ENCODE measurements at regions of chr4 and their contacts with region 1.

Region 1: GRCh38 chr4:2761035-2761923 is 5.1 kb upstream of the TNIP2 start:
- DNase-seq: peak; percentile 74 to 88 (median 80)
- ATAC-seq: peak; percentile 59 to 83 (median 74)
- H3K4me3 ChIP-seq: no peak overlapping the region
- H3K27ac ChIP-seq: peak overlapping the region; percentile 46 to 95 (median 88)
- H3K4me1 ChIP-seq: peaks cover 13 to 18% (median 15%) of the 10 kb centered on the region in 3 donors
- H3K27me3 ChIP-seq: no peaks in the 10 kb centered on the region
- CTCF ChIP-seq: no peak

Region 2: DNA sequence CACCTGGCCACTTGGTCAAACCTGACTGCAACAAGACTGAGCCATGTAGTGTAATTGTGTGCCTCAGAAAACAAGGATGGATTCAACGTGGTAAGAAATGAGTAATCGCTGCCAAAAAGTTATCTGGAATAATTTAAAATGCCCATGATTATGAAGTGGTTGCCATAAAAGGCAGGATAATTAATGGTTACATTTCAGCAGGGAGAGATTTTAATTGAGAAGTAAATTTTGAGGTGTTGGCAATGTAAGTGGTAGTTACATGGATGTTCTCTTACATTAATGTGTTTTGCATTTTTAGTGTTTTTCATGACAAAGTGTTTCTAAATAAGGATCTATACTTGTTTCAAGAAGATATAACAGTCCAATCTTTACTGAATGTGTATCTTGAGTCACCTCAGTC is 535.0 kb before region 1 on chr4:
- intact Hi-C with region 1: no loop called
- DNase-seq: no peak
- ATAC-seq: no peak
- H3K4me3 ChIP-seq: no peak overlapping the region
- H3K27ac ChIP-seq: no peak overlapping the region
- H3K4me1 ChIP-seq: no peaks in the 10 kb centered on the region
- H3K27me3 ChIP-seq: no peaks in the 10 kb centered on the region
- CTCF ChIP-seq: no peak

Region 3: DNA sequence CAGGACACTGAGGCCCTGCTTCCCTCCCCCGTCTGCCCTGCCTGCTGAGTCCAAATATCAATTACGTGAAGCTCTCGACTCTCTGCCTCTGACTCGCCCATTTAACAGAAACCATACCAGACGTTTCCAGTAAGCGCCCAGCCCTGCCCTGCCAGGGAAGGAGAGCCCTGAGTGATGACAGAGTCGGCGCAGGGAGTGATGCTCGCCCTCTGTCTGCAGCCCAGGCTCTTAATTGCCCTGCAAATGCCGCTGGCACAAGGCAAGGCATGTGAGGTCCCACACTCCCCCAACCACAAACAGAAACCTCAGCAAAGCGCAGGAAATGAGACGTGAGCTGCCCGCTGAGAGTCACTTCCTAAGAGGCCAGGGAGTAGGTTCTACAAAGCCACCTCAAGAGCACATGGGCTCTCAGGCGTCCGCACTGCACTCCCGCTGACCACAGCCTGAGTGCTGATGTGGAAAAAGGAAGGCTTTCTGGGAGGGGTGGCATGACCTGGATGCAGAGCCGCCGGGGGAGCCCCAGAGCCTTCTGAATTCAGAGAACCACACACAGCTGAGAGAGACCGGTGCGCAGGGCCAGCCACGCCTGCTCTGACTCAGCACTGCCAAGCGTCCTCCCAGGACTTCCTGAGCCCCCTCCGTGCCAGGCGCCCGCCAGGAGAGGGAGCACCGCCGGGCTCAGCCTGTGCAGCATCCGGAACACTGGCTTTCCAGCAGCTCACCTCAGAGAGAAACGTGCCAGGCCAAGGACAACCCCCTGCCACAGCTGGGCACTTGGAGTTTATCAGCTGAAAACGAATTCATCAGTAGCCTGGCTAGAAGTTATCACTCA is 348.2 kb before region 1 on chr4:
- intact Hi-C with region 1: no loop called
- DNase-seq: peak; percentile 80 to 92 (median 87)
- ATAC-seq: peak; percentile 92 to 96 (median 96)
- H3K4me3 ChIP-seq: peak overlapping the region in 1 of 4 donors; percentile 19
- H3K27ac ChIP-seq: peak overlapping the region in 3 of 4 donors; percentile 25 to 44 (median 38)
- H3K4me1 ChIP-seq: peaks cover 5 to 12% (median 9%) of the 10 kb centered on the region in 3 donors
- H3K27me3 ChIP-seq: no peaks in the 10 kb centered on the region
- CTCF ChIP-seq: peak in 1 of 4 donors; percentile 15

Region 4: DNA sequence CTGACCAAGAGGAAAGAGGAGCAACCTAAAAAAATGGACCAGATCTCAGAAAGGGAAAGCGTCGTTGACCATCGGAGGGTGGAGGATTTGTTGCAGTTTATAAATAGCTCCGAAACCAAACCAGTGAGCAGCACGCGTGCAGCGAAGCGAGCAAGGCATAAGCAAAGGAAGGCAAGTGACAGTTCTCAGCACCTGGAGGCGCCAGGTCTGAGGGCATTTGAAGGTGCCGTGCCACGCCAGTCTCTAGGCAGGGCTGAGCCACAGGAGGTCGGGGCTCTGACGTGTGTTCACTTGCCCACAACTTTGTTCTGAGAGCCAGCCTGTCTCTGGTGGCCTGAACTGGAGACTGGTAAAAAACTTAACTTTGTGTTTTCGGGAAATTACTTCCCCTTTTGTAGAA is 64.9 kb before region 1 on chr4:
- intact Hi-C with region 1: no loop called
- DNase-seq: peak in 1 of 6 donors; percentile 8
- ATAC-seq: no peak
- H3K4me3 ChIP-seq: no peak overlapping the region
- H3K27ac ChIP-seq: no peak overlapping the region
- H3K4me1 ChIP-seq: no peaks in the 10 kb centered on the region
- H3K27me3 ChIP-seq: no peaks in the 10 kb centered on the region
- CTCF ChIP-seq: no peak

Region 5: DNA sequence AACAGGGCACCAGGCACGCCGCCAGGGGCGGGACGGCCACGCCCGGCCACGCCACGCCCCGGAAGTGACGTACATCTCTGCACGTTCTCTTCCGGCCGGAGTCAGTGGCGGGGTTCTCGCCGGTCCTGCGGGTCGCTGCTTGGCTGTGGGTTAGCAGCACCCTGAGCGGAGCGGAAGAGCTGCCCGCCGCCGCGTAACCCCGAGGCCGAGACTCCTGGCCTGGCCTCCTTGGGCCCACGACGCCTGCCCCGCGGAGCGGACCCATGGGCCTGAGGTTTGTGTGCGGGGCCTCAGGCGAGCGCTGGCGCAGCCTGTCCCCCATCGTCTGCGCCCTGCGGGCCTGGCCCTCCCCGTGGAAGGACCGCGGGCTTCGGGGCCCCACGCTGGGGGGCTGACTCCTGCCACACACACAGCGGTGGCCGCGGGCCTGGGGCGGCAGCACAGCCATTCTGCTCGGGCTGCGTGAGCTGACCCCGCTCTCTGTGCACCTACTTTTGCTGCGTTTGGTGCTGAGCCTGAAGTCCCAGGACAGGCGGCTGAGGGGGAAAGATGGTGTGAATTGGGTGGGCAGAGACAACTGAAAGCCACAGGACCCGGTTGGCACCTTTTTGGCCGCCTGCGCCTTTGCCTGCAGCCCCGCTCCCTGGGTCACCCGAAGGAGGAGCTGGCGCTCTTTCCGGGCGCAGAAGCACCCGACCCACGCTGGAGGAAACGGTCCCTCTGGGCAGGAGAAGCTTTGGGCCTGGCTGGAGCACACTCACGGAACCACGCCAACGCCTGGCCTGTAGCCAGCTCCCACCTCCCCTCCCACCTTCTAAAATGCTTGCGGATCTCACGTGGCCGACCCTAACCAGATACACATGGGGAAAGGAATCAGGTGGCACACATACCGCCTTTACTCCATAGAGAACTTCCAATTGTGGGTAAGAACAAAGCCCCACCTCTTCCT is 173.8 kb after region 1 on chr4:
- intact Hi-C with region 1: loop called in 2 of 3 experiments (anchors 10 kb)
- DNase-seq: peak; percentile 93 to 100 (median 97)
- ATAC-seq: peak; percentile 74 to 84 (median 80)
- H3K4me3 ChIP-seq: peak overlapping the region; percentile 94 to 99 (median 96)
- H3K27ac ChIP-seq: peak overlapping the region; percentile 74 to 77 (median 76)
- H3K4me1 ChIP-seq: peaks cover 10 to 16% (median 13%) of the 10 kb centered on the region in 3 donors
- H3K27me3 ChIP-seq: no peaks in the 10 kb centered on the region
- CTCF ChIP-seq: peak in 1 of 4 donors; percentile 7

Region 6: DNA sequence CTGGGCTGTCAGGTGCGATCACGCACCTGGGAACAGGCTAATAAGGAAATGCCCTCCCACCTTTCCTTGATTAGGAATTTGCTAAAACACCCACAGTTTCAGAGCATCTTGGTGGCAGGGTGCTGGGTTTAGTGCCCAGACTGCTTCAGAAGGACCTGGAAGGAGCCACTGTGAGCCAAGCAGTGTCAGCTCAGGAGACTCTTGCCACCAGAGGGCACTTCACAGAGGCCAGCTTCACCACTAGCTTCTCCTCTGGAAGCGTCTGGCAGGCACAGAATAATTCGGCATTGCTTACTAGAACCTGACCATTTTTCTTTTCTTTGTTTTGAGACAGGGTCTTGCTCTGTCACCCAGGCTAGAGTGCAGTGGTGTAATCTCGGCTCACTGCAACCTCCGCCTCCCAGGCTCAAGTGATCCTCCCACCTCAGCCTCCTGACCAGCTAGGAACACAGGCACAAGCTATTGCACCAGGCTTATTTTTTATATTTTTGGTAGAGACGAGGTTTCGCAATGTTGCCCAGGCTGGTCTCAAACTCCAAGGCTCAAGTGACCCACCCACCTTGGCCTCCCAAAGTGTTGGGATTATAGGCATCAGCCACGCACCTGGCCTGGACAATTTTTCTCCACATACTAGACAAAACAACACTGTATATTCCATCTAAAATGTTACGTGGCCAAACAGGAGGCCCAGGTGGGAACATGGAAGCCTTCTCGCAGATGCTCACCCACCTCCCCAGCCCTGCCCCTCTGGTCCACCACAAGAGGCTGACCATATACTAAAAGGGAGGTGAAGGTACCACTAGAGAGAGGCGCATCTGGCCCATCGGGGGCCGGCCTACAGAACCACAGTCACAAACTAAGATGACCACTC is 187.9 kb after region 1 on chr4:
- intact Hi-C with region 1: no loop called
- DNase-seq: peak in 2 of 6 donors; percentile 28 to 55
- ATAC-seq: peak; percentile 57 to 88 (median 73)
- H3K4me3 ChIP-seq: no peak overlapping the region
- H3K27ac ChIP-seq: no peak overlapping the region
- H3K4me1 ChIP-seq: no peaks in the 10 kb centered on the region
- H3K27me3 ChIP-seq: no peaks in the 10 kb centered on the region
- CTCF ChIP-seq: peak in 3 of 4 donors; percentile 19 to 36 (median 21)

Region 7: GRCh38 chr4:3037957-3038461 is 276.7 kb after region 1 on chr4:
- intact Hi-C with region 1: loop called in 1 of 3 experiments (anchors 10 kb)
- DNase-seq: no peak
- ATAC-seq: no peak
- H3K4me3 ChIP-seq: no peak overlapping the region
- H3K27ac ChIP-seq: no peak overlapping the region
- H3K4me1 ChIP-seq: peaks cover 0 to 4% (median 0%) of the 10 kb centered on the region in 3 donors
- H3K27me3 ChIP-seq: no peaks in the 10 kb centered on the region
- CTCF ChIP-seq: no peak